GM12878 (cell line): ENCODE measurements at regions of chr6 and their contacts with region 1.

Region 1: GRCh38 chr6:16503970-16504415 is 257.3 kb downstream of the ATXN1 start:
- DNase-seq: peak; percentile 92
- ATAC-seq: peak; percentile 85
- H3K4me3 ChIP-seq: no peak overlapping the region; the same call in 1 of the 2 replicates
- H3K27ac ChIP-seq: peak overlapping the region; percentile 70
- H3K4me1 ChIP-seq: peaks cover 50% of the 10 kb centered on the region
- H3K27me3 ChIP-seq: no peaks in the 10 kb centered on the region
- CTCF ChIP-seq: no peak
- EP300 ChIP-seq: peak; percentile 85 to 90
- POLR2A ChIP-seq: no peak
- RAD21 ChIP-seq: no peak

Region 2: GRCh38 chr6:16403831-16404230 is 100.2 kb before region 1 on chr6:
- CTCF ChIA-PET with region 1: interaction called, 12 read pairs
- POLR2A ChIA-PET with region 1: no interaction called
- RAD21 ChIA-PET with region 1: interaction called, 3 read pairs
- SMC1A ChIA-PET with region 1: interaction called, 3 read pairs
- in situ Hi-C with region 1: no loop called
- intact Hi-C with region 1: no loop called
- DNase-seq: no peak
- ATAC-seq: no peak
- H3K4me3 ChIP-seq: no peak overlapping the region
- H3K27ac ChIP-seq: no peak overlapping the region
- H3K4me1 ChIP-seq: peaks cover 4% of the 10 kb centered on the region; the same call in 1 of the 2 replicates
- H3K27me3 ChIP-seq: no peaks in the 10 kb centered on the region
- CTCF ChIP-seq: no peak; a peak in 1 of 6 replicates
- EP300 ChIP-seq: no peak
- POLR2A ChIP-seq: no peak
- RAD21 ChIP-seq: peak; percentile 21; the same call in 1 of the 2 replicates

Region 3: DNA sequence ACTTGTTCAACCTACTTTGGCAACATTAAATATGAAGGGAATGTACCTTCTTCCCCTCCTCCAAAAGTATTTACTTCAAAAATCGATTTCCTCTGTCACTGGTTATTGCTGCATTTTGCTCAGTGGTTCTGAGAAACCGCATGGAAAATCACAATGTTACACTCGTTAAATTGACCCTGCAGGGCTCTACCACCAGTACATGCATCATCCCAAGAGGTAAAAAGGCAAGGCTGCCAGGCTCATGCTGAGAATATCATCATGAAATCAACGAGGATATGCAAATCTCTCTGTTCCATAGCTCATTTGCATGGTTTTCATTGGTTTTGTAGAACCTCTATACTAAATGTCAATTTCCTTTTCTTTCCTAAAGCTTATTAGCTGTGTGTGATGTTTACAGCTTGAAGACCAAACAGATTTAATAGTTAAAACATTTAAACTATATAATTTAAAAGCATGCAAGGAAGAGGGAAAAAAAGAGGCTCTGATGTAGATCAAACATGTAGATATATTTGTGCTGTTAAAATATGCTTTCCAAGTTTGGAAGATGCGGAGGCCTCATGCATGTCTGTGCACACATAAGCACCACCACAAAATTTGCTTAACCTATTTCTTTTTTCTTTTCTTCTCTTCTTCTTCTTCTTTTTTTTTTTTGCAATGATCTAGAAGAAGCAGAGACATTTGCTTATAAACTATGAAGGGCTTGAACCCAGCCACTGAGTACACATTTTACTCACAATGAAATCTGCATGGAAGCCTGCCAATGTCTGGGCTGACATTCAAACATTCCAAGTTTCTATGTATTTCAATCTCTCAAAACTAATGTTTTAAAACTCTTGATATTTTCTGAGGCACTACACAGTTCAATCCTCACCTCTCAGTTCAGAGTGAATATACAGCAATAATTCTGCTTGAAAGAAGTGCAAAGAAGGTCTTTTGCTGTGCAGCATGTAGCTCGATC is 71.6 kb before region 1 on chr6:
- CTCF ChIA-PET with region 1: no interaction called
- POLR2A ChIA-PET with region 1: interaction called, 3 read pairs
- RAD21 ChIA-PET with region 1: interaction called, 9 read pairs
- SMC1A ChIA-PET with region 1: interaction called, 18 read pairs
- in situ Hi-C with region 1: no loop called
- intact Hi-C with region 1: no loop called
- DNase-seq: peak; percentile 77
- ATAC-seq: peak; percentile 78
- H3K4me3 ChIP-seq: peak overlapping the region; percentile 14; the same call in 1 of the 2 replicates
- H3K27ac ChIP-seq: peak overlapping the region; percentile 39
- H3K4me1 ChIP-seq: peaks cover 45% of the 10 kb centered on the region
- H3K27me3 ChIP-seq: no peaks in the 10 kb centered on the region
- CTCF ChIP-seq: no peak
- EP300 ChIP-seq: 0 out of 4 replicates have a peak, but pooled peaks of 1 of the 2 experiments have one; percentile 7
- POLR2A ChIP-seq: no peak
- RAD21 ChIP-seq: 0 out of 2 replicates have a peak, but pooled peaks have one; percentile 1

Region 4: GRCh38 chr6:16438718-16439591 is 65.0 kb before region 1 on chr6:
- CTCF ChIA-PET with region 1: interaction called, 4 read pairs
- POLR2A ChIA-PET with region 1: interaction called, 3 read pairs
- RAD21 ChIA-PET with region 1: interaction called, 14 read pairs
- SMC1A ChIA-PET with region 1: interaction called, 6 read pairs
- in situ Hi-C with region 1: no loop called
- intact Hi-C with region 1: no loop called
- DNase-seq: peak; percentile 53
- ATAC-seq: peak; percentile 78
- H3K4me3 ChIP-seq: no peak overlapping the region
- H3K27ac ChIP-seq: peak overlapping the region; percentile 70
- H3K4me1 ChIP-seq: peaks cover 41% of the 10 kb centered on the region
- H3K27me3 ChIP-seq: no peaks in the 10 kb centered on the region
- CTCF ChIP-seq: no peak
- EP300 ChIP-seq: no peak
- POLR2A ChIP-seq: no peak
- RAD21 ChIP-seq: no peak

Region 5: GRCh38 chr6:16471222-16471909 is 32.6 kb before region 1 on chr6:
- CTCF ChIA-PET with region 1: interaction called, 87 read pairs
- POLR2A ChIA-PET with region 1: interaction called, 12 read pairs
- RAD21 ChIA-PET with region 1: interaction called, 101 read pairs
- SMC1A ChIA-PET with region 1: interaction called, 46 read pairs
- in situ Hi-C with region 1: no loop called
- intact Hi-C with region 1: no loop called
- DNase-seq: peak; percentile 76
- ATAC-seq: peak; percentile 71
- H3K4me3 ChIP-seq: 0 out of 2 replicates have a peak overlapping the region, but pooled peaks have one; percentile 9
- H3K27ac ChIP-seq: peak overlapping the region; percentile 90
- H3K4me1 ChIP-seq: peaks cover 71% of the 10 kb centered on the region
- H3K27me3 ChIP-seq: no peaks in the 10 kb centered on the region
- CTCF ChIP-seq: no peak
- EP300 ChIP-seq: peak; percentile 74 to 81; a peak in 3 of 4 replicates
- POLR2A ChIP-seq: peak; percentile 47; the same call in 1 of the 2 replicates
- RAD21 ChIP-seq: no peak

Region 6: DNA sequence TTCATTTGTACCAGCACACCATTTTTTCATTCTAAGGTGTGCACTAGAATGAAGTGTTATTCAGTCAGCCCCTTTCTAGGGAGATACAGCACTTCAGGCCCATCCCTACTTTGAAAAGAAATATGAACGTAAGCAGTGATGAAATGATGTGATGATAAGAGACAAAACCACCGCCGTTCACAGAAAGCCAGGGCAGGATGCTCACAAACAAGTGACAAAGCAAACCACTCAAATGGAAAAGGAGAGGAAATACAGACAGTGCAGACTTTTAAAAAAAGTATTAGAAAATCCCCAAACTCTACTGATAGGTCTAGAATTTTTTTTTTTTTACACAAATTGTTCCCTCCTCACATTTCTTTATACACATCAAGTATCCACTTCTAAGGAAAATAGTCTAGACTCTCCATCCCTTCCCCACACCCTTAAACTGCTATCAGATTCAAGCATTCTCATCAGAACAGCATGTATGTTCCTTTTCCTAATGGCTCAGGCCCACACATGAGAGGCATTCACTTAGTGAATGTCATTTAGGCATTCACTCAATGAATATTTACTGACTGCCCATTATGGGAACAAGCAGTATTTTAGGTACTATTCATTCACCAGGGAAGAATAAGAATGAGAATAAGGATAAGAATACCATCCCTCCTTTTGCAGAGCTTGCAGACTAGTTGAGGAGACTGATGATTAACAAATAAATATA is 22.1 kb before region 1 on chr6:
- CTCF ChIA-PET with region 1: interaction called, 203 read pairs
- POLR2A ChIA-PET with region 1: interaction called, 97 read pairs
- RAD21 ChIA-PET with region 1: interaction called, 101 read pairs
- SMC1A ChIA-PET with region 1: interaction called, 154 read pairs
- in situ Hi-C with region 1: no loop called
- intact Hi-C with region 1: no loop called
- DNase-seq: no peak
- ATAC-seq: peak; percentile 61
- H3K4me3 ChIP-seq: peak overlapping the region; percentile 20; the same call in 1 of the 2 replicates
- H3K27ac ChIP-seq: peak overlapping the region; percentile 83
- H3K4me1 ChIP-seq: peaks cover 65% of the 10 kb centered on the region
- H3K27me3 ChIP-seq: no peaks in the 10 kb centered on the region
- CTCF ChIP-seq: no peak
- EP300 ChIP-seq: peak; percentile 68 to 77; a peak in 3 of 4 replicates
- POLR2A ChIP-seq: no peak
- RAD21 ChIP-seq: peak; percentile 3; the same call in 1 of the 2 replicates

Region 7: DNA sequence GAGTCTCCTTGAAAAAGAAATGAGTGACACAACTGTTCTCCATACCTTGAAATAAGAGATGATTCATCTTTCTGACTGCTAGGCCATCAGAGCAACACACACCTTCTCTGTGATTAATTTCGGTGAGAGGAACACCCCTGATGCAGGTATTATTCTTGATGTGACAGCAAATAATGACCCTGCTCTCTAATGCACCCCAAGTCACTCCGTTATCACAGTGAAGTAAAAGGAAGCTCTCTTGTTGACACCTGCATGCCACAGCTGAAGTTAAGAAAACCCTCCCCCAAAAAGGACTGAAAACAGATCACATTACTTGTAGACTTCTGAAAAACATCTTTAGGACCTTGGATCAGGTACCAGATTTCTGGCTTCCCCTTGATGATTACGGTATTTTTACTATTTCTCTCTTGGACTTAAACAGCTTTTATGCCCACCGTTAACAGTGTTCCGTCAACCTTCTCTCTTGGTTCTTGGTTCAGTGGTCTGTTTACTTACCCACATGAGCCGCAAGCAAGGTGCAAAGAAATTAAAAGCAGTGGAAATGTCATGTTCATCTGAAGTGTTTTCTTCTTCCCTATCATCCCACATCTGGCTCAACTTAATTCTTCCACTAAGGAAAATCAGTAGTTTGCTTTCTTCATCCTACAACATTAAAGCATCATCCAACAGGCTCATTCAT is 15.9 kb before region 1 on chr6:
- CTCF ChIA-PET with region 1: interaction called, 203 read pairs
- POLR2A ChIA-PET with region 1: interaction called, 97 read pairs
- RAD21 ChIA-PET with region 1: interaction called, 58 read pairs
- SMC1A ChIA-PET with region 1: interaction called, 154 read pairs
- in situ Hi-C with region 1: no loop called
- intact Hi-C with region 1: no loop called
- DNase-seq: no peak
- ATAC-seq: peak; percentile 7
- H3K4me3 ChIP-seq: peak overlapping the region; percentile 49; the same call in 1 of the 2 replicates
- H3K27ac ChIP-seq: peak overlapping the region; percentile 40; the same call in 1 of the 2 replicates
- H3K4me1 ChIP-seq: peaks cover 69% of the 10 kb centered on the region
- H3K27me3 ChIP-seq: no peaks in the 10 kb centered on the region
- CTCF ChIP-seq: no peak
- EP300 ChIP-seq: peak in 1 of 2 experiments; percentile 41; a peak in 1 of 4 replicates
- POLR2A ChIP-seq: no peak
- RAD21 ChIP-seq: no peak

Region 8: DNA sequence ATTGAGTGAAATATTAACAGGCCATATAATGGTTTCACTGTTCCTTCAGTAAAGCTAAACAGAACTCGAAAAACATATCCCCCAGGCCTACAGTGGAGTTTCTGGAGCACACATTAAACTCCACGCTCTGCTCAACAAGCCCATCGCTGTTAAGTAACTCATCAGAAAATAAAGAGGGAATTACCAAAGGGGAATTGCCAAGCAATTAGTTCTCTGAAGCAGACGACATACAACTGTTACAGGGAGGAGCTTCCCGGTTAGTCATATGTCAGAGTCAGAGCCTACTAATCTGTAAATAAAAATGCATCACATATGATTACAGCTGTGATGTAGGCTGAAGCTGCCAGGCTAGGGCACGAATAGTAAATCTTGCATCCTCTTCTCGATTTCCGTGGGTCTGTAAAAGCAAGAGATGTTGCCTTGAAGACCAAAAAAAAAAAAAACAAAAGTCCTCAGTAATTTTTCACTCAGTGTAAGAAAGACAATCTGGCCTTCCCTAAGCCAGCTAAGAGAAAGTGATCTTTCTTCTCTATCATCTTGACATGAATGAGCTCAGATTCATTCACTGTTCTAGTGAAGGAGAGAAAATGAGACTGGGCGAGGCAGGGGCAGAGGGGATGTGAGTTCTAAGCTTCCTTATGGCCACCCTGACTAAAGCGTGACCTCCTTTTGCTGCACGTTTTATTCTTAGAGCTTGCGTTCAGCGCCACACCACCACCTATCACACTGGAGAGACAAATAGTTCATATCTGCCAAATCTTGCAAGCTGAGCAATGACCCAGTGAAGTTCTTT is 243.4 kb after region 1 on chr6:
- CTCF ChIA-PET with region 1: no interaction called
- POLR2A ChIA-PET with region 1: no interaction called
- RAD21 ChIA-PET with region 1: no interaction called
- SMC1A ChIA-PET with region 1: no interaction called
- in situ Hi-C with region 1: no loop called
- intact Hi-C with region 1: no loop called
- DNase-seq: no peak
- ATAC-seq: peak; percentile 44
- H3K4me3 ChIP-seq: no peak overlapping the region
- H3K27ac ChIP-seq: no peak overlapping the region
- H3K4me1 ChIP-seq: no peaks in the 10 kb centered on the region
- H3K27me3 ChIP-seq: no peaks in the 10 kb centered on the region
- CTCF ChIP-seq: no peak
- EP300 ChIP-seq: no peak
- POLR2A ChIP-seq: no peak
- RAD21 ChIP-seq: no peak